Endothelial cell of umbilical vein (primary cell): ENCODE measurements at regions of chr1 and their contacts with region 1.

Region 1: DNA sequence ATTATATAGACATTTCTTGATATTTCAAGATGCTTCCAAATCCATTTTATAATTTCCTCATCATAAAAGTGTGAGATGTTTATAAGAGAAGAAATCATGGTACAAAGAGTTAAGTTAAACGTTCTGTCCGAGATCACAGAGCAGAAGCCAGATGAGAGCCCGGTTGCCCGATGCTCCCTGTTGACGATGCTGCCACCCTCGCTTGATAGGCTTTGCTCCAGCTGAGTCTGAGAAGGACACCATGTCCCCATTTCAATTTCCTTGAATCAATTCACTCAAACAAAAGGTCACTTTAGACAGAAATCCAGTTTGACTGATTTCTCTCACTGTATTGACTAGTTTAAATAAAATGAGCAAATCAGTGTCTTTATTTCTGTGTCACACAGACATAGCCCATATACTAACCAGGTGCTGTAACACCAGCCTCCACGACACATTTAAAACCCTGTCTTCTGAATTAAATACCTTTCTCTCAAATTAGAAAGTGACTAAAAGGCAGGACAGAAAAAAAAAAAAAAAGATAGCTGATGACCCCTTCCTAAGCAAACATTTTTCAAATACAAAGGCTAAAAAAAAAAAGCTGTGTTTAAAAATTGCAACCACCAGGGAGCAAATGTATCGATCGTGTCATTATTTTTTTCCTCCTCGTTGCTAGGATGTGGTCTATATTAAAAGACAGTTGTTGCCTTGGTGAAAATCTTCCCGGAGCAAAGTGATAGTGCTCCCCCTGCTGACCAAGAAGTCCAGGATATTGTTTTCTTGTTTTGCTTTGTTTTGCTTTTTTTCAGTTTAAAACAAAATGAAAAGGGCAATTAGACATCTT is 35.2 kb downstream of the DNASE2B start:
- DNase-seq: peak; percentile 81
- H3K4me3 ChIP-seq: peak overlapping the region in 1 of 3 experiments; percentile 52
- H3K27ac ChIP-seq: peak overlapping the region; percentile 69
- H3K4me1 ChIP-seq: peaks cover 5% of the 10 kb centered on the region
- H3K27me3 ChIP-seq: no peaks in the 10 kb centered on the region
- CTCF ChIP-seq: peak; percentile 64 to 67
- POLR2A ChIP-seq: no peak

Region 2: GRCh38 chr1:83905315-83905907 is 528.1 kb before region 1 on chr1:
- CTCF ChIA-PET with region 1: interaction called, 3 read pairs
- POLR2A ChIA-PET with region 1: no interaction called
- dilution Hi-C with region 1: no loop called
- intact Hi-C with region 1: loop called (anchors 5 kb)
- DNase-seq: peak; percentile 39
- H3K4me3 ChIP-seq: no peak overlapping the region
- H3K27ac ChIP-seq: no peak overlapping the region
- H3K4me1 ChIP-seq: peaks cover 3% of the 10 kb centered on the region
- H3K27me3 ChIP-seq: no peaks in the 10 kb centered on the region
- CTCF ChIP-seq: peak; percentile 21 to 56
- POLR2A ChIP-seq: no peak

Region 3: DNA sequence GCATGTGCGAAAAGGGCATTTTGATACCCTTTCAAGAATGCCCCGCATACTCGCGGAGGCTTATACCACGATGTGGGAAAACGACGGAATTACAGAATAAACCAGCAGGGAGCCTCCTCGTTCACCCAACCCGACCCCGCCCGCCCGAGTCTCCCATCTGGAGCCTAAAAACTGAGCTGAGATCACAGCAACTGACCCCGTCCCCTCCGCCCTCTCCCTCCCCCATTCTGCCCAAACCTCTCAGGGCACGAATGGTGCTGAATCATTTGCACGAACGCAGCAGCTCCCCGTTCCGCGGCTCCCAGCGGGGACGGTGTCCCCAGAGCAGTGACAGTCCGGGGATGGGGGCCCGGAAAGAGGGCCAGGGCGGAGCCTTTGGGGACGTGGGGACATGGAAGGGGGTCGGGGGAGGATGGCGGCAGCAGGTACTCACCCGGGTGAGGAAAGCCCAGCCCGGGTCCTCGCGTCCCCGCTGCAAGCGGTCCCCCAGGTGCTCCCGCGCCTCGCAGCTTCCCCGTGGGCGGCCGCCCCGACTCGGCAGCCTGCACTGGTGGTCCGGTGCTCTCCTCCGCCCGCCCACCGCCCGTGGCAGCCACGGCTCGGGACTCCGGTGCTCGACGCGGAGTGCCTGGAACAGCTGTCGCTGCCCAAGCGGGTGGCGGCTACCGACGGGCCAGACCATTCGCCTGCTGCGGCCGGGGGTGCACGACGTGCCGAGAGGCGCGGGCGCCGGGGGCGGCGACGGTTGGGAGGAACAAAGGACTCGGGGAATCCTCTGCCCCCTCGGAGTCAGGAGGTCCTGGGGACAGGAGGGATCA is 434.8 kb before region 1 on chr1 and contains the start of gene TTLL7:
- CTCF ChIA-PET with region 1: no interaction called
- POLR2A ChIA-PET with region 1: no interaction called
- dilution Hi-C with region 1: no loop called
- intact Hi-C with region 1: loop called (anchors 10 kb)
- DNase-seq: peak; percentile 68
- H3K4me3 ChIP-seq: peak within 1 kb of the TSS; percentile 63 to 76 (median 74)
- H3K27ac ChIP-seq: peak within 1 kb of the TSS; percentile 88
- H3K4me1 ChIP-seq: peaks cover 17% of the 10 kb centered on the region
- H3K27me3 ChIP-seq: peaks cover 4 to 5% of the 10 kb centered on the region in 2 experiments
- CTCF ChIP-seq: no peak
- POLR2A ChIP-seq: no peak
- total RNA-seq, gene TTLL7: 4.9 and 11.7 TPM in 2 replicates

Region 4: GRCh38 chr1:84192681-84193080 is 240.8 kb before region 1 on chr1:
- CTCF ChIA-PET with region 1: no interaction called
- POLR2A ChIA-PET with region 1: no interaction called
- dilution Hi-C with region 1: no loop called
- intact Hi-C with region 1: loop called (anchors 5 kb)
- DNase-seq: no peak
- H3K4me3 ChIP-seq: no peak overlapping the region
- H3K27ac ChIP-seq: no peak overlapping the region
- H3K4me1 ChIP-seq: no peaks in the 10 kb centered on the region
- H3K27me3 ChIP-seq: no peaks in the 10 kb centered on the region
- CTCF ChIP-seq: no peak
- POLR2A ChIP-seq: no peak

Region 5: GRCh38 chr1:84247425-84248220 is 185.8 kb before region 1 on chr1:
- CTCF ChIA-PET with region 1: no interaction called
- POLR2A ChIA-PET with region 1: no interaction called
- dilution Hi-C with region 1: no loop called
- intact Hi-C with region 1: loop called (anchors 1 kb)
- DNase-seq: no peak
- H3K4me3 ChIP-seq: peak overlapping the region in 1 of 3 experiments; percentile 18
- H3K27ac ChIP-seq: peak overlapping the region; percentile 90
- H3K4me1 ChIP-seq: peaks cover 35% of the 10 kb centered on the region
- H3K27me3 ChIP-seq: no peaks in the 10 kb centered on the region
- CTCF ChIP-seq: no peak
- POLR2A ChIP-seq: no peak

Region 6: GRCh38 chr1:84365225-84366221 is 67.9 kb before region 1 on chr1:
- CTCF ChIA-PET with region 1: interaction called, 4 read pairs
- POLR2A ChIA-PET with region 1: no interaction called
- dilution Hi-C with region 1: no loop called
- intact Hi-C with region 1: loop called (anchors 1 kb)
- DNase-seq: peak; percentile 96
- H3K4me3 ChIP-seq: no peak overlapping the region
- H3K27ac ChIP-seq: peak overlapping the region; percentile 97
- H3K4me1 ChIP-seq: peaks cover 28% of the 10 kb centered on the region
- H3K27me3 ChIP-seq: no peaks in the 10 kb centered on the region
- CTCF ChIP-seq: no peak
- POLR2A ChIP-seq: peak; percentile 51

Region 7: DNA sequence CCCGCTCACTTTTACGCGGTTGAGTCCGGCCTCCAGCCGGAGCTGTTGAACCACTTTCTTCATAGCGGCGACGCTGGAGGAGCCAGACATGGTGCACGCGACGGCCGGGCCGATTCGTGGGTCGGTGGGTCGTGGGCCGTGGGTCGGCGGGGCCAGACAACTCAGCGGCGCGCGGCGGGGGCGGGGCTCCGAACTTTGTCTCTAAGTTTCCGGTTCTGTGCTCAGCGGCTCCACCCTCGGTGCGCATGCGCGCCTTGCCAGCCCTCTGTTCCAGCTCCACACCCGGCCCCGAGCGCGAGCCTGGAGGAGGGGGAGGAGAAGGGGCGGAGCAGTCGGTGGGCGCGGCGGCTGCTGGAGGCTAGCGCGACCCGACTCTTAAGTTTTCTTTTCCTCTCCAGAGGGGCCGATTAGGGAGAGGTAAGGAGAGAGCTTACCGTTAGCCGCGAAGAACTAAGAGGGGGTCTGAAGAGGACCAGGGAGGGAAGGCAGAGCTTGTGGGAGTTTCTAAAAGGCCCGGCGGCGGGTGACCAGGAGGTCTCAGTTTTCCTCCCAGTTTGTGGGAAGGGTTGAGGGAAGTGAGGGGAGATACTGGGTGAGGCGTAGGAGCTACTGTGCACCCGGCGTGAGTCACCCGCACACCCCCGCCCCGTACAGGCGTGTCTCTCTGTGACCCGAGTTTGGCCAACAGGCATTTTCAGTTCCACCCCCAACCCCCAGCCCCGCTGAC is 72.7 kb after region 1 on chr1 and contains the starts of genes GNG5 and SPATA1:
- CTCF ChIA-PET with region 1: no interaction called
- POLR2A ChIA-PET with region 1: no interaction called
- dilution Hi-C with region 1: no loop called
- intact Hi-C with region 1: no loop called
- DNase-seq: peak; percentile 97
- H3K4me3 ChIP-seq: peak within 1 kb of the TSS; percentile 55 to 89 (median 73)
- H3K27ac ChIP-seq: peak within 1 kb of the TSS; percentile 91
- H3K4me1 ChIP-seq: peaks cover 25% of the 10 kb centered on the region
- H3K27me3 ChIP-seq: no peaks in the 10 kb centered on the region
- CTCF ChIP-seq: no peak
- POLR2A ChIP-seq: peak; percentile 81
- total RNA-seq, gene GNG5: 172 and 175 TPM in 2 replicates
- total RNA-seq, gene SPATA1: 1.7 and 2.6 TPM in 2 replicates